CD8-positive, alpha-beta memory T cell (primary cell): ENCODE measurements at regions of chr1 and their contacts with region 1.

Region 1: DNA sequence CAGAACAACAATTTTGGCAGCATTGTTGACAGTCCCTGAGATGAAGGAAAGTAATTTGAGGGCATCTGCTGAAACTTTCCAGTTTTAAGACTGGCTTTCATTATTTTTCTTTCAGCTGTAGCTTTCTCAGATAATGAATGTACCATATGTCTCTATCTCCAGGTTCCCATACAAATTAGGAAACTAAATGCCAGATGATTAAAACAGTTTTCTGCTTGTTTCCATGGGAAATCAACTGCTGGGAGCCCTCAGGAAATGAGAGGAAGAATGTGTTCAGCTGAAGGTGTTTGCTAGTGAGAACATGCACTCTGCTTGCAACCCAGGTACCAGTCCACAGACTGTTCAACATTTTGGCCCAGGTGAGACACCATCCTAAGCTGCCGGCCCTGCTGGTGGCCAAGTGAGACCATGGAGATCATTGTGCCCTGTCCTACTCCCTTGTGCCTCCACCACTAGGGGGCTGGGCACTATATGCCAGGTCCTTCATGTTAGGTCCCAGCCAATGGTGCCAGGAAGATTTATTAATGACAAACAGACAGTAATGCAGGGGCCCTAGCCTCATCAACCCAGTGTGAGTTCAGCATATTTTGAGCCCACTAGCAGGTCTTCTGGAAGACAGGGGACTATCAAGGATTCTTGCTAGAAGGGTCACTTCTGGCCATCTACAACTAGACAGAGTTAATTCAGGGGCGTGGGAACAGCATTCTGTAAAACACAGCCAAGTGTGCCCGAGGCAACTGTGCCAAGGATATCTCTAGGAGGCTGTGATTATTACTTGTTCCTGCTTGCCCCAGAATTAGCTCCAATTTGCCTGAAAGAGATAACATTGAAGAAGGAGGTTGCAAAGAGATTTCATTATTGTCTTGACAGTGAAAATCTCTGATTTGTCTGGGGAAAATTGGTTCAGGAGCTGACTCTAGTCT is 17.0 kb upstream of the LRRC8C start:
- DNase-seq: peak in 2 of 5 donors; percentile 13 to 48
- H3K4me3 ChIP-seq: no peak overlapping the region
- H3K4me3 Mint-ChIP-seq: no peak overlapping the region
- H3K27ac ChIP-seq: no peak overlapping the region
- H3K27ac Mint-ChIP-seq: no peak overlapping the region
- H3K4me1 ChIP-seq: peaks cover 38% of the 10 kb centered on the region
- H3K4me1 Mint-ChIP-seq: peaks cover 47 to 86% (median 85%) of the 10 kb centered on the region in 3 donors
- H3K27me3 ChIP-seq: no peaks in the 10 kb centered on the region
- H3K27me3 Mint-ChIP-seq: no peaks in the 10 kb centered on the region

Region 2: DNA sequence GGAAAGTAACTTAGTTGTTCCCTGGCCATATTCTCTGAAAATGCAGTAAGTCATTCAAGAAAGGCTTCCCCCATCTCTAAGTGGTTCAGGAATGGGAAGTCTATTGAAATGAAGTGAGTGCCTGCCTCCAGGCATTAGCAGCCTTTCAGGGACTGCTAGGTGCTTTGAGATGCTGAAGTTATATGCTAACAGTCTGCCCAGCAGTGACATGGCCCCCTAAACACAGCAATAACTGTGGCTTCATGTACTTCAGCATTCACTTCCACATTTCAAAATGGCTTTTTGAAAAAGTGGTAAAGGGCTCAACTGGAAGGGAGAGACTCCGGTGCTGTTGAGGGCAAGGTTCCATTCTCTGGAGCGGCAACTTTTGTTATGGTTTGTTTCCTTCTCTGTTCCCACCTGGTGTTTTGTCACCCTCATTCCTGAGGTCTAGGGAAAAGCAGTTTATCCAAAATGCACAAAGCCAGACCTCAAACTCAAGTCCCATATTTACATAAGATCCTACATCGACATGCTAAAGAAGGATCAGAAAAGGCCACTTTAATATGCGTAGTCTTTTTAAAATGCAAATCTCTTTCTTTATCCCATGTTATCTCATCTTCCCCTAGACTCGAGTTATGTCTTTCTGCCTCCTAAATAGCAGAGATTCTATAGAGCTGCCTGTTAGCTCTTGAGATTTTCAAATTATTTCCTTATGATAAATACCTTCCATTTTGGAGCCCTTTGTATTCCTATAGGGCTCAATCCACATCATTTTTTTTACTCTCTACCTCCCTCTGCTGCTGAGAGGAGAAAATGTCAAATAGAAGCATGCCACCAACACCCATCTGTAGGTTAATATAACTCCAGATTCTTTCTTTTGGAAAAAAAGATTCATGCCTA is 17.2 kb before region 1 on chr1:
- CTCF ChIA-PET with region 1: interaction called, 403 read pairs
- POLR2A ChIA-PET with region 1: interaction called, 6 read pairs
- DNase-seq: peak in 2 of 5 donors; percentile 28 to 38
- H3K4me3 ChIP-seq: no peak overlapping the region
- H3K4me3 Mint-ChIP-seq: no peak overlapping the region
- H3K27ac ChIP-seq: no peak overlapping the region
- H3K27ac Mint-ChIP-seq: peak overlapping the region in 6 of 8 donors; percentile 6 to 72 (median 22)
- H3K4me1 ChIP-seq: peaks cover 43% of the 10 kb centered on the region
- H3K4me1 Mint-ChIP-seq: peaks cover 48 to 80% (median 75%) of the 10 kb centered on the region in 3 donors
- H3K27me3 ChIP-seq: no peaks in the 10 kb centered on the region
- H3K27me3 Mint-ChIP-seq: no peaks in the 10 kb centered on the region

Region 3: DNA sequence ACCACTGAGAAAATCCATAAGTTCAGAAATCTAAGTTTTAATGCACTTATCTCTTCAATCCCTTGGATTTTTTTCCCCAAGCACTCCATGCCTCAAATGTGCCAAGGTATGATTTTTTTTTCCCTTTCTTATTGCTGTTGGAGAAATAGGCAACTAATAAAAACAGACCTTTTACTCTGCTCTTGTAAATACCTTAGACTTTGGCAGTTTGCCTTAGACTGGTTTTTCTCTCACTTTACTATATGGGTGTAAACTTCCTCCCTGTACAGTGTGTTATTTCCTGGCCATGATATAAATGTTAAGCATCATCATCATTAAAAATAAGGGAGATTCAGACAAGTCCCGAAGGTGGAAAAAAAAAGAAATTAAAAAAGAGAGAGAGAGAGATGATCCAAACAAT is 82.7 kb after region 1 on chr1:
- CTCF ChIA-PET with region 1: no interaction called
- POLR2A ChIA-PET with region 1: interaction called, 12 read pairs
- DNase-seq: no peak
- H3K4me3 ChIP-seq: peak overlapping the region; percentile 7
- H3K4me3 Mint-ChIP-seq: peak overlapping the region; percentile 47 to 86 (median 82)
- H3K27ac ChIP-seq: peak overlapping the region; percentile 9
- H3K27ac Mint-ChIP-seq: peak overlapping the region; percentile 68 to 99 (median 88)
- H3K4me1 ChIP-seq: peaks cover 77% of the 10 kb centered on the region
- H3K4me1 Mint-ChIP-seq: peaks cover 84 to 96% (median 95%) of the 10 kb centered on the region in 3 donors
- H3K27me3 ChIP-seq: no peaks in the 10 kb centered on the region
- H3K27me3 Mint-ChIP-seq: no peaks in the 10 kb centered on the region

Region 4: GRCh38 chr1:89739013-89739843 is 123.3 kb after region 1 on chr1:
- CTCF ChIA-PET with region 1: no interaction called
- POLR2A ChIA-PET with region 1: no interaction called
- DNase-seq: no peak
- H3K4me3 ChIP-seq: peak overlapping the region; percentile 11
- H3K4me3 Mint-ChIP-seq: peak overlapping the region; percentile 22 to 63 (median 54)
- H3K27ac ChIP-seq: peak overlapping the region; percentile 33
- H3K27ac Mint-ChIP-seq: peak overlapping the region; percentile 66 to 98 (median 89)
- H3K4me1 ChIP-seq: peaks cover 30% of the 10 kb centered on the region
- H3K4me1 Mint-ChIP-seq: peaks cover 46 to 62% (median 61%) of the 10 kb centered on the region in 3 donors
- H3K27me3 ChIP-seq: no peaks in the 10 kb centered on the region
- H3K27me3 Mint-ChIP-seq: no peaks in the 10 kb centered on the region

Region 5: DNA sequence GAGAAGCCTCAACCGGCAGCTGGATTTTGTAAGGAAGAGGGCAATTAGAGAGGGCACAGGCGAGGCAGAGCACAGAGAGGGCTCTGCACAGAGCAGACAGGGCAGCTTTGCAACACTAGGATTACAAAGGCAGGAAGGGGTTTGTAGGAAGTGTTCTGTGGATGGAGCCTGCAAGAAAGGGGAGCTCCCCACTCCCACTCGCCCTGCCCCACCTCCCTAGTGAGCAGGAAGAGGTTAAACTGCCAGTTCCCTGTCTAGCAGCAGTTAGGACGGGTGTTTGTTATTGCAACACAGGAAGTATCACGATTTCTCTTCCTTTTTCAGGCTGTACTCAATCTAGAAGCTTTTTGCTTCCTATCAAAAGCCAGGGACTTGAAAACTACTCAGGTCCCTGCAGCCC is 141.6 kb after region 1 on chr1:
- CTCF ChIA-PET with region 1: interaction called, 56 read pairs
- POLR2A ChIA-PET with region 1: interaction called, 3 read pairs
- DNase-seq: peak in 3 of 5 donors; percentile 31 to 59 (median 50)
- H3K4me3 ChIP-seq: peak overlapping the region; percentile 12
- H3K4me3 Mint-ChIP-seq: peak overlapping the region; percentile 42 to 83 (median 79)
- H3K27ac ChIP-seq: no peak overlapping the region
- H3K27ac Mint-ChIP-seq: peak overlapping the region; percentile 76 to 99 (median 91)
- H3K4me1 ChIP-seq: peaks cover 81% of the 10 kb centered on the region
- H3K4me1 Mint-ChIP-seq: peaks cover 82 to 90% (median 89%) of the 10 kb centered on the region in 3 donors
- H3K27me3 ChIP-seq: no peaks in the 10 kb centered on the region
- H3K27me3 Mint-ChIP-seq: no peaks in the 10 kb centered on the region